T-cell (primary cell): ENCODE measurements at regions of chr21 and their contacts with region 1.

Region 1: DNA sequence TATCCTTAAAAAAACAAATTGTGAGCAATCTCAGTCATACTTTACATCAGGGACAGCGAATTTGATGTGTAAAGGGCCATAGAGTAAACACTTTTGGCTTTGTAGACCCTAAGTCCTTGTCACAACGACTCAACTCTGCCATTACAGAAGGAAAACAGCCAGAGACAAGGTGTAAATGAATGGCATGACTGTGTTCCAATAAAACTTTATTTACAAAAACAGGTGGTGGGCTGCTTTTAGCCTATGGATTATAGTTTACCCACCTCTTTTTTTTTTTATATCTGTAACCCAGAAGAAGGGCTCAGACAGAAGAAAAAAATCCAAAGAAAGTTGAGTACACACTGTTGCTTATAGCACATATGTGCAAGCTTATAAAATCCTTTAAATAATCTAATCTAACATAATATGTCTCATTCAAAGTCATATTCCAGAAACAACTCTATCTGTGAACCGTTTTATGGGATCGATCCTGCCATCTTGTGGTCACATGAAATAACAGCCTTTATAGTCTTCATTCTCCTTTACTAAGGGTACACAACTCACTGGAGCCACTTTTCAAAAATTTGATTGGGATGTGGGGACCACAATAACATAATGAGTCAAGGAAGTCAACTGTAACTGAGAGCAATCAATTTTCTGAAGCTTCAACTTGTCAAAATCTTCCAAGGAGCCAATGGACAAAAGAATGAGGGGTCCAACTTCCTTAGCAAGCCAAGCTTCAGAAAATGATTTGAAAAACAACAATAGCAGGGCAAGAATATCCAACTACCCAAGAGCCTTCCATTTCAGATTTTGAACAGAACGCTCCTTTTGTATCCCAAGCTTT is 142.2 kb upstream of the KRTAP19-8 start:
- DNase-seq: peak in 5 of 35 experiments; percentile 18 to 75 (median 26)
- ATAC-seq: no peak
- H3K4me3 ChIP-seq: peak overlapping the region in 1 of 2 donors; percentile 23
- H3K4me3 Mint-ChIP-seq: peak overlapping the region; percentile 70 to 81 (median 76)
- H3K27ac ChIP-seq: peak overlapping the region; percentile 64
- H3K27ac Mint-ChIP-seq: peak overlapping the region; percentile 95 to 96
- H3K4me1 ChIP-seq: peaks cover 57 to 81% of the 10 kb centered on the region in 2 experiments
- H3K4me1 Mint-ChIP-seq: peaks cover 76 to 81% (median 79%) of the 10 kb centered on the region in 3 donors
- H3K27me3 ChIP-seq: no peaks in the 10 kb centered on the region
- H3K27me3 Mint-ChIP-seq: no peaks in the 10 kb centered on the region

Region 2: GRCh38 chr21:31098576-31099005 is 81.9 kb before region 1 on chr21:
- CTCF ChIA-PET with region 1: interaction called, 4 to 27 read pairs
- POLR2A ChIA-PET with region 1: interaction called in 1 of 2 experiments, 5 read pairs
- DNase-seq: peak; percentile 12 to 83 (median 61)
- ATAC-seq: peak; percentile 74 to 81 (median 78)
- H3K4me3 ChIP-seq: no peak overlapping the region
- H3K4me3 Mint-ChIP-seq: peak overlapping the region in 2 of 3 donors; percentile 3 to 51
- H3K27ac ChIP-seq: no peak overlapping the region
- H3K27ac Mint-ChIP-seq: peak overlapping the region; percentile 1 to 62
- H3K4me1 ChIP-seq: peaks cover 12 to 16% of the 10 kb centered on the region in 2 experiments
- H3K4me1 Mint-ChIP-seq: peaks cover 23 to 31% (median 26%) of the 10 kb centered on the region in 3 donors
- H3K27me3 ChIP-seq: peaks cover 0 to 17% of the 10 kb centered on the region in 2 experiments
- H3K27me3 Mint-ChIP-seq: peaks cover 2 to 4% of the 10 kb centered on the region in 2 donors

Region 3: DNA sequence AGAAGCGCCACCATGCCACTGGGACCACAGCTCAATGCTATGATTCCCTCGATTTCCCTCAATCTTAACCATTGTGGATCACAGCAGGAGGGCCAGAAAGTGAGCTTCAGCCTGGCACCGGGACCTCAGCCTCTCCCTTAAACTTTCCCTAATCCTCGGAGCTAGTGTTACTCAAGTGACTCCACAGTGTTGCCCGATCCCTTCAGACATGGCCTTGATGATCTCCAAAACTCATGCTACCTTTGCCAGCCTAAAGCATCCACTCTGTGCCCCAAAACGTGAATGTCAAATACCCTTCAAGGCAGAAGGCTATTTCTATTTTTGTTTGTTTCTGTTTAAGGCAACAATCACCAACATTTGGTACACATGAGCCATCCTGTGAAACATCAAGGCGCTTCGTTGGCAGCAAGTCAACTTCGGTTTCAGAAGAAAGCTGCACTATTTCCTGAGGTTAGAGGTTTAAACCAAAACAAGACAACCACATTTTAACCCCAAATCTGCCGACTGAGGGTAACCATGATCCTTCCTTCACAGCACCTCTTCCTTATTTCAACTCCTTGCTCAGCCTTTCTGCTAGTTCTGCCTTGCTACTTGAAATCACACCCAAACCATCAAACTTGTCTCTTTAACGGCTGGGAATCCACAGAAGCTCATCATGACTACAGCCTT is 47.8 kb before region 1 on chr21:
- CTCF ChIA-PET with region 1: interaction called, 10 to 11 read pairs
- POLR2A ChIA-PET with region 1: no interaction called
- DNase-seq: peak; percentile 48 to 91 (median 79)
- ATAC-seq: peak; percentile 93 to 95 (median 94)
- H3K4me3 ChIP-seq: peak overlapping the region; percentile 5 to 52
- H3K4me3 Mint-ChIP-seq: peak overlapping the region; percentile 74 to 83 (median 75)
- H3K27ac ChIP-seq: no peak overlapping the region
- H3K27ac Mint-ChIP-seq: peak overlapping the region; percentile 94 to 95
- H3K4me1 ChIP-seq: peaks cover 24 to 36% of the 10 kb centered on the region in 2 experiments
- H3K4me1 Mint-ChIP-seq: peaks cover 60 to 70% (median 65%) of the 10 kb centered on the region in 3 donors
- H3K27me3 ChIP-seq: peaks cover 0 to 11% of the 10 kb centered on the region in 2 experiments
- H3K27me3 Mint-ChIP-seq: no peaks in the 10 kb centered on the region

Region 4: DNA sequence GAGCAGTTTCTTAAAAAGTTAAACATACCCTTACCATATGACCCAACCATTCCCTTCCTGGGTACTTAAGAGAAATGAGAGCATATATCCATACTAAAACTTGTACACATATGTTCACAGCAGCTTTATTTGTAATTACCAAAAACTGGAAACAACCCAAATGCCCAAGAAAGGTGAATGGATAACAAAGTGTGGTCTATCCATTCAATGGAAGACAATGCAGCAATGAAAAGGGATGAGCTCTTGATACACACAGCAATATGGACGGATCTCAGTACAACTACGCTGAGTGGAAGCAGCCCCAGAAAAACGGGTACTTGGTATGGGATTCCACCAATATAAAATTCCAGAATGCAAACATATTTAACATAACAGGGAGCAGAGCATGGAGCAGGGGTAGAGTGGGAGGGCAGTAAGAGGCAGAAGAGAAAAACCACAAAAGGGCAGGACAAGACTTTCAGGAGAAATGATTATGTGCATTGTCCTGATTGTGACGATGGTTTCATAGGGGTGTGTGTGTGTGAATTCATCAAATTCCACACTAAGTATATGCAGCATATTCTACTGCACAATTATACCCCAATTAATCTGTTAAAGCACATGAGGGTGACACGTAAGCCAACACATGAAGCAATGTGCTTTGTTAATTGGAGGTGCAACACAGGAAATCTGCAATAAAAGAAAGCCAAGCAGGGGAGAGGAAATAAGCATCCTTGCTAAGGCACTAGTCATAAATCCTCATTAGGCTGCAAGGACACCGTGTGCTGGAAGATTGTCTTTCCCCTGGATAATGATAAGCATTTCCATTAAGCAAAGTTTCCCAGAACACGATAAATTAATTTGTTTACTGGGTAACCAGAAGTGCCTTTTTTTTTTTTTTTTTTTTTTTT is 29.1 kb before region 1 on chr21:
- CTCF ChIA-PET with region 1: interaction called, 3 to 16 read pairs
- POLR2A ChIA-PET with region 1: interaction called in 1 of 2 experiments, 3 read pairs
- DNase-seq: no peak
- ATAC-seq: peak in 2 of 4 experiments; percentile 27 to 60
- H3K4me3 ChIP-seq: no peak overlapping the region
- H3K4me3 Mint-ChIP-seq: peak overlapping the region in 1 of 3 donors; percentile 53
- H3K27ac ChIP-seq: no peak overlapping the region
- H3K27ac Mint-ChIP-seq: peak overlapping the region; percentile 0 to 11
- H3K4me1 ChIP-seq: peaks cover 13 to 17% of the 10 kb centered on the region in 2 experiments
- H3K4me1 Mint-ChIP-seq: peaks cover 65 to 76% (median 75%) of the 10 kb centered on the region in 3 donors
- H3K27me3 ChIP-seq: no peaks in the 10 kb centered on the region
- H3K27me3 Mint-ChIP-seq: no peaks in the 10 kb centered on the region

Region 5: GRCh38 chr21:31158789-31159581 is 21.5 kb before region 1 on chr21:
- CTCF ChIA-PET with region 1: interaction called, 8 to 16 read pairs
- POLR2A ChIA-PET with region 1: interaction called in 1 of 2 experiments, 4 read pairs
- DNase-seq: peak in 6 of 35 experiments; percentile 18 to 57 (median 34)
- ATAC-seq: peak; percentile 89 to 95 (median 95)
- H3K4me3 ChIP-seq: peak overlapping the region in 1 of 2 donors; percentile 17
- H3K4me3 Mint-ChIP-seq: peak overlapping the region; percentile 65 to 71 (median 66)
- H3K27ac ChIP-seq: peak overlapping the region; percentile 73
- H3K27ac Mint-ChIP-seq: peak overlapping the region; percentile 92 to 98
- H3K4me1 ChIP-seq: peaks cover 44 to 51% of the 10 kb centered on the region in 2 experiments
- H3K4me1 Mint-ChIP-seq: peaks cover 68 to 84% (median 81%) of the 10 kb centered on the region in 3 donors
- H3K27me3 ChIP-seq: no peaks in the 10 kb centered on the region
- H3K27me3 Mint-ChIP-seq: no peaks in the 10 kb centered on the region